Activated CD8-positive, alpha-beta T cell treated with anti-CD3 and anti-CD28 coated beads for 36 hours (primary cell): ENCODE measurements at regions of chr11 and their contacts with region 1.

Region 1: DNA sequence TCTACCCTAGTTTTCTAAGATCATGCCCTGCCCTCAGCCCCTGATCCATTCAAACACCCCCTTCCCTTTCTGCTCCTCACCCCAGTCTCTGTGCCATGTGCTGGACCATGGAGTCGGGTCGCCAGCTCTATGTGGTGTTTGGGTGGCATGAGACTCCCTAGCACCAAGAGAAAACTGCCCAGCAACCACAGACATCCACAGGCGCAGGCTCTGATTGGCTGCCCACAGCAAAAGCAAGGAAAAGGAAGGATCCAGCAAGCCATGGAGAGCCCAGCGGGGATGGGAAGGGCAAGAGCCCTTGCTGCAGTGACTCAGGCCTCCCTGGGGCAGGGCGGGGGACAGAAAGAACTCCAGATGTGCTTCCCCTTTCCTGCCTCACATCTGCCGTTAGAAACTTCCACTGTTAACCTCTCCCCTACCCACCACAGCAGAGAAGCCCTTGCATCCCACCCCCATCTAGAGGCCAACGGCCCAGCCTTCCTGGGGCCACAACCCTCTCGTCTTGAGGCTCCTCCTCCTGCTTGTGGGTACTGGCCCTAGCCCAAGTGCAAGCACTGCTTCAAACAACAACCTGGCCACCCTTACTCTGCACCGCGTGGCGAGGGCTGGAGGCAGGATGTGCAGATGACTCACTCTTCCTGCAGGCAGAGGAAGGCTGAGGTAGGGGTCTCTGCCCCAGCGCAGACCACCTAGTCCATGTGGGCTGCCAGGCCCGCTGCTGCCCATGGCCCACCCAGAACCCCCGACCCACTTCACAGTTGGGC is 9.7 kb upstream of the AHNAK start:
- DNase-seq: peak; percentile 95
- ATAC-seq: peak; percentile 68
- H3K4me3 Mint-ChIP-seq: peak overlapping the region; percentile 41
- H3K27ac Mint-ChIP-seq: peak overlapping the region; percentile 94
- H3K4me1 Mint-ChIP-seq: peaks cover 92% of the 10 kb centered on the region
- H3K27me3 Mint-ChIP-seq: no peaks in the 10 kb centered on the region
- CTCF ChIP-seq: no peak

Region 2: DNA sequence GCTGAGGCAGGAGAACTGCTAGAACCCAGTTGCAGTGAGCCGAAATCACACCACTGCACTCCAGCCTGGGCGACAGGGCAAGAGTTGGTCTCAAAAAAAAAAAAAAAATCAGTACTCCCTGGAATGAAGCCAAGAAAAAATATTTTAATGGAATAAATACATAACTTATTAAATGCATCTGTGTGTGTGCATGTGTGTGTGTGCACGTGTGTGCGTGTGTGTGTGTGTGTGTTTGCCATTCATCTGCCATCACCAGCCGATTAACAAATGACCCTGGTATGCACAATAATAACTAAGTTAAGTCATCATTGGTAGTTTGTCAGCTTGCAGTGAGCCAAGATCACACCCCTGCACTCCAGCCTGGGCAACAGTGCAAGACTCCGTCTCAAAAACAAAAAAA is 172.5 kb before region 1 on chr11:
- CTCF ChIA-PET with region 1: no interaction called
- POLR2A ChIA-PET with region 1: no interaction called
- intact Hi-C with region 1: no loop called
- DNase-seq: no peak
- ATAC-seq: no peak
- H3K4me3 Mint-ChIP-seq: no peak overlapping the region
- H3K27ac Mint-ChIP-seq: no peak overlapping the region
- H3K4me1 Mint-ChIP-seq: peaks cover 7% of the 10 kb centered on the region
- H3K27me3 Mint-ChIP-seq: no peaks in the 10 kb centered on the region
- CTCF ChIP-seq: no peak

Region 3: DNA sequence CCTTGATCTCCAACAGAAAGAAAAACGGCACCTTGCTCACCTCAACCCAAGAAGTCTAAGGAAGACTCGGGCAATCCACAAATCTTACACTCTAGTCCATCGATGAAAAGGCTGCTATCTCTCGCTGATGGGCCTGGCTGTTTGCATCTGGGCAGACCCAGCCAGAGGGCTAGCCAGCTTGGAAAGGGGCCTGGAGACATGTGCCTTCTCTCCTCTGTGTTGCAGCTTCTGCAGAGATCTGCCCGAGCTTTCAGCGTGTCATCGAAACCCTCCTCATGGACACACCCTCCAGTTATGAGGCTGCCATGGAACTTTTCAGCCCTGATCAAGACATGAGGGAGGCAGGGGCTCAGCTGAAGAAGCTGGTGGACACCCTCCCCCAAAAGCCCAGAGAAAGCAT is 134.3 kb before region 1 on chr11:
- CTCF ChIA-PET with region 1: interaction called, 66 read pairs
- POLR2A ChIA-PET with region 1: interaction called, 4 read pairs
- intact Hi-C with region 1: loop called (anchors 5 kb)
- DNase-seq: no peak
- ATAC-seq: no peak
- H3K4me3 Mint-ChIP-seq: no peak overlapping the region
- H3K27ac Mint-ChIP-seq: no peak overlapping the region
- H3K4me1 Mint-ChIP-seq: peaks cover 12% of the 10 kb centered on the region
- H3K27me3 Mint-ChIP-seq: peaks cover 5% of the 10 kb centered on the region
- CTCF ChIP-seq: no peak

Region 4: DNA sequence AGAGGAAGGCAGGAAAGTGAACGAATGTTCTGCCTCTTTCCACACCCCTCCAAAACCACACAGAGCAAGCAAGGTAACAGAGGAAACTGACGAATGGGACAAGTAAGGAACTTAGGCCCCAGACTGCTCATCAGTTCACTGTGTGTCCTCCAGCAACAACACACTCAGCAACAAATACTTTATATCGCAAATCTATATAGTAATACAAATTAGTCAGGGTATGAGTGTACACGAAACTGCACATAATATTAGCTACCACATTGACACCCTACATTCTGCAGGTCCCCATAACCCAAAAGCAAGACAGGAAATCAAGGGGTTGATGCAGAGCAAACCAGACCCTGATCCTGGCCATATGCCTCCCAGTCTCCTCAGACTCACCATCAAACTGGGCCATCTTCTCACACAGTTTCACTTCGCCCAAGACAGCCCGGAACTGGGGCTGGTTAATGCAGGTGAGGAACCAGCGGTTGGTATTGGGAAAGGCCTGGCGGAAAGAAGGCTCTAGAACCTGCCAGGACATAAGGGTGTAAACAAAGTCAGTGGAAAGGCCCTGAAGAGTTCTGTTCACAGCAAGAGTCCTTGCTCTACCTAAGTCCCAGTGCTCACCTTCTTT is 10.8 kb after region 1 on chr11:
- CTCF ChIA-PET with region 1: interaction called, 25 read pairs
- POLR2A ChIA-PET with region 1: interaction called, 156 read pairs
- intact Hi-C with region 1: no loop called
- DNase-seq: no peak
- ATAC-seq: peak; percentile 49
- H3K4me3 Mint-ChIP-seq: no peak overlapping the region
- H3K27ac Mint-ChIP-seq: peak overlapping the region; percentile 61
- H3K4me1 Mint-ChIP-seq: peaks cover 57% of the 10 kb centered on the region
- H3K27me3 Mint-ChIP-seq: no peaks in the 10 kb centered on the region
- CTCF ChIP-seq: no peak

Region 5: DNA sequence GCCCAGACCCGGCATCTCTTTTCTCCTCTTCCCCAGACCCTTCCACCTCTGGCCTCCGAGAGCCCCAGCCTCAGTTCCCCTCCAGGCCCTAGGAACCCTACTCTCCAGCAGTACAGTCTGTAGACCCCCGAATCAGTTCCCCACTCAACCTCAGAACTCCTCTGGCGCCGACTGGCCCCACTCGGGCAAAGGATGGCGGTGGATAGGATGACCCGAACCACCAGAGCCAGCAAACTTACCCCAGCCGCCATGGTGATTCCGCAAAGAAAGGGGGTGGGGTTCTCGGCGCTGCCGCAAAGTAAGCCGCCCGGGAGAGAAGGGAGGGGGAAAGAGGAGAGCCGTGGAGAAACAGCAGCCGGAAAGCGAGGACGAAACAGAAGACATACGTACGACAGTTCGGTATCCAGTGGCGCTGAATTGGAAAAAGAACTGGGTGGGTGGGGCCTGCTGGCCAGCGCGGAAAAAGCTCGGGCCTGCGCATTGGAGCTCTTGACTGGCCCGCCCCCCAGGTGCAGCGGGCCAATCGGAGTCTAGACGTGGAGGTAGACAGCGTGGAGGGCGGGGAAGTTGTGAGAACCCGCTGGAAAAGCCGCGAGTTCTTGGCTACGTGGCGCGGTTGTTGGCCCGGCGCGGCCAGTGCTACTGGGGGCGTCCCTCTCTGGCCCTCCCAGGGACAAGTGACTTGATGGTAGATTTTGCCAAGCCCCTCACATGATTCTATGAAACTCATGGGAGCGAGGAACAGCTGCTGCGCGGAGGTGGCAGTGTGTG is 17.5 kb after region 1 on chr11 and contains the start of gene EEF1G:
- CTCF ChIA-PET with region 1: interaction called, 25 read pairs
- POLR2A ChIA-PET with region 1: interaction called, 156 read pairs
- intact Hi-C with region 1: no loop called
- DNase-seq: peak; percentile 99
- ATAC-seq: peak; percentile 98
- H3K4me3 Mint-ChIP-seq: peak within 1 kb of the TSS; percentile 96
- H3K27ac Mint-ChIP-seq: peak within 1 kb of the TSS; percentile 97
- H3K4me1 Mint-ChIP-seq: peaks cover 48% of the 10 kb centered on the region
- H3K27me3 Mint-ChIP-seq: no peaks in the 10 kb centered on the region
- CTCF ChIP-seq: no peak
- total RNA-seq, gene EEF1G: 1,925 to 1,979 TPM